Sigmoid colon (tissue), 7 donors: ENCODE measurements at regions of chr22 and their contacts with region 1.

Region 1: DNA sequence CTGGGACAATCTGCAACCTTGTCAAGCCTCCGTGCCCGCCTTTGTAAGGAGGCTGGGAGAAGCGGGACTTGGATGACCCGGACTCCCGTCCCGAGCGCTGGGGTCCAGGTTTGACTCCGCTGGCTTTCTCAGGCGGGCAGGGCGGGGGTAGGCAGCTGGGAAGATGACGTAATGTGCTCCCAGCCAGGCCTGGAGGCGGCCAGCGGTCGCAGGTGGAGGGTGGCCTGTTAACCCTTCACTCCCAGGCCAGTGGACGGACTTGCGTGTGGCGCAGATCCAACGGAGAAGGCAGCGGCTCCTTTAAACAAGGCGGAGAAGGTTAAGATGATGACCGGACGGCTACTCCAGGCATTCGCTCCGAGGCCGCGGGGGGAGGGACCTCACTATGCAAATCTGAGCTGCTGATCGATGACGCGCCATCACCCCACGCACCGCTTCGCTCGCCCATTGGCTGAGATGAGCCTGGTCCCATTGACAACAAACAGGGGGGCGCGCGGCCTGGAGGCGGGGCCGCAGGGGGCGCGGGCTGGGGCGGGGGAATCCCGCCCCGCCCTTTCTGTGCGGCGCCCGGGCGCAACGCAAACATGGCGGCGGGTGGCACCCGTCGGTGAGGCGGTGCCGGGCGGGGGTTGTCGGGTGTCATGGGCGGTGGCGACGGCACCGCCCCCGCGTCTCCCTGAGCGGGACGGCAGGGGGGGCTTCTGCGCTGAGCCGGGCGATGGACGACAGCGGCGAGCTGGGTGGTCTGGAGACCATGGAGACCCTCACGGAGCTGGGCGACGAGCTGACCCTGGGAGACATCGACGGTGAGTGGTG is at the start of gene SREBF2:
- DNase-seq: peak; percentile 100
- H3K4me3 ChIP-seq: peak within 1 kb of the TSS; percentile 70 to 98 (median 95)
- H3K27ac ChIP-seq: peak within 1 kb of the TSS; percentile 90 to 97 (median 92)
- H3K4me1 ChIP-seq: peaks cover 0 to 26% (median 17%) of the 10 kb centered on the region in 4 donors
- H3K27me3 ChIP-seq: no peaks in the 10 kb centered on the region
- CTCF ChIP-seq: no peak
- EP300 ChIP-seq: peak in 1 of 4 donors; percentile 82
- POLR2A ChIP-seq: peak; percentile 30 to 73
- total RNA-seq, gene SREBF2: 25.2 to 51.0 (median 33.4) TPM

Region 2: DNA sequence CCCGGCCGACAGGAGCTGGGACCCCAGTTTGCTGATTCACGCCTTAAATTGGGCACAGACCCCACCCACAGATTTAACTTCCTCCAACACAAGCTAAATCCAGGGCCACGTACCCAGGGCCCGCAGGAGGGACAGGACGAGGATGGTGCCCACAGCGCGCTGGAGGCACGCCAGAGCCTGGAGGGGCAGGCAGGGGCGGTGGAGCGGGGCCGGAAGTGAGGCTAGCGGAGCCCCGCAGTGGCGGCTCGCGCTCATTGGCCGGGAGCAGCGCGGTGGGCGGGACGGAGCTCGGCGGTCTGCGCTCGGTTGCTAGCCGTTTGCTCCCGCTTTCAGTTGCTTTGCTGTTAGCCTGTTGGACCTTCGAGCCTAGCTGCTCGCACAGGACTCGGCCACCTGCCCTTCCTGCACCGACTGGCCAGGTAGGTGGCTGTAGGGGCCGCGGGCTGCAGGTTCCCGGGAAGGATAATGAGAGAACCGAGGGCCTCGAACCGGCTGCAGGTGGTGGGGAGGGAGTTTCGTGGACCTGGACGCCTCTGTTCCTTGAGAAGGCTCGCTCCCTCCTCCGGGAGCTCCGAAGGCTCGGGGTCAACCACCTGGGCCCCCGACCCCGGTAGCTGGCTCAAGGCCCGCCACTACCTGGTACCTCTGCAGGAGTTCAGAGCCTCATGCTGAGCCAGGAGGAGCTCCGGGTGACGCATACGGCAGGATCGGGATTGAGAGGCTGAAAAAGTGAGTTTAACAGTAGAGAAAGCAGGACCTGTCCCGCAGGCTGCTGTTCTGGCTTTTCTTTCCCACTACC is 32.2 kb before region 1 on chr22 and contains the start of gene CCDC134:
- intact Hi-C with region 1: loop called (anchors 2 kb)
- DNase-seq: peak; percentile 95
- H3K4me3 ChIP-seq: peak within 1 kb of the TSS; percentile 63 to 92 (median 84)
- H3K27ac ChIP-seq: peak within 1 kb of the TSS; percentile 88 to 92 (median 88)
- H3K4me1 ChIP-seq: peaks cover 0 to 27% (median 21%) of the 10 kb centered on the region in 4 donors
- H3K27me3 ChIP-seq: no peaks in the 10 kb centered on the region
- CTCF ChIP-seq: no peak
- EP300 ChIP-seq: no peak
- POLR2A ChIP-seq: peak; percentile 59 to 70
- total RNA-seq, gene CCDC134: 4.5 to 8.6 (median 7.9) TPM

Region 3: GRCh38 chr22:41946629-41947423 is 114.1 kb after region 1 on chr22 and contains the start of gene CENPM:
- intact Hi-C with region 1: loop called (anchors 2 kb)
- DNase-seq: peak; percentile 94
- H3K4me3 ChIP-seq: peak within 1 kb of the TSS; percentile 45 to 72 (median 60)
- H3K27ac ChIP-seq: peak within 1 kb of the TSS; percentile 15 to 68 (median 60)
- H3K4me1 ChIP-seq: peaks cover 0 to 17% (median 11%) of the 10 kb centered on the region in 4 donors
- H3K27me3 ChIP-seq: no peaks in the 10 kb centered on the region
- CTCF ChIP-seq: peak in 1 of 4 experiments; percentile 19
- EP300 ChIP-seq: no peak
- POLR2A ChIP-seq: no peak
- total RNA-seq, gene CENPM: 1.1 to 5.4 (median 2.5) TPM in 3 of 4 donors, not detected in the other